ENCODE measurements at regions of chr3 and their contacts with region 1.

Region 1: GRCh38 chr3:56988458-56989168 is 71.9 kb upstream of the SPATA12 start:
- DNase-seq: peak; percentile 81 to 87 (median 84)
- ATAC-seq: peak; percentile 69
- H3K4me3 ChIP-seq: no peak overlapping the region
- H3K27ac ChIP-seq: peak overlapping the region in 2 of 4 donors; percentile 34 to 71
- H3K4me1 ChIP-seq: peaks cover 27% of the 10 kb centered on the region
- H3K27me3 ChIP-seq: no peaks in the 10 kb centered on the region
- CTCF ChIP-seq: peak; percentile 61 to 89 (median 80)
- POLR2A ChIP-seq: no peak

Region 2: DNA sequence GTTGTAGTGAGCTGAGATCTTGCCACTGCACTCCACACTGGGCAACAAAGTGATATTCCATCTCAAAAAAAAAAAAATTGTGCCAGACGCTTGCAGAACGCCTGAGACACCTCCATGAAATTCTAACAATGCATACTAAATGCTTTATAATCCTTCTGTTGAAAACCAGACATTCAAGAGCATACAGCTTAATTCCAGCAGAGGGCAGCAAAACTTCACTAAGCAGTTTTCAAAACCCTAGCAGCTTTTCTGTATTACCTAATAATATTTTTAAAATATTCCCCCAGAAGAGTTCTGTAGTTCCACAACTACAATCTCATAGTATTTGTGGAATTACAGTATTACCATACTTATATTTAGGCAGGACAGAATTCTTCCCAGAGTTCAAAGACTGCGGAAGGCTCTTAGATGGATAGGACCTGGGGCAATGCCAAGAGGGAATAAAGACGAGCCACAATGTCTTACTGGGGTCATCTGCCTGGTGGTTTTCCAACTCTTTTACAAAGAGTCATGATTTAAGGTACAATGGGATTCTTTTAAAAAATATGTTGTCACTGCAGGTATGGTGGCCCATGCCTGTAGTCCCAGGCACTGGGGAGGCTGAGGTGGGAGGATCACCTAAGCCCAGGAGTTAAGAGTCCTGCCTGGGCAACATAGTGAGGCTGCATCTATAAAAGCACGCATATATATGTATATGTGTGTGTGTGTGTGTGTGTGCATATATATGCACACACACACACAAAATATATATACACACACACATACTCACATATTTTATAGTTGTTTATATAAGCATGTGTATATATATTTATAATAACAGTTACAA is 285.9 kb before region 1 on chr3:
- intact Hi-C with region 1: loop called (anchors 5 kb)
- DNase-seq: peak; percentile 60 to 80 (median 64)
- ATAC-seq: peak; percentile 79
- H3K4me3 ChIP-seq: no peak overlapping the region
- H3K27ac ChIP-seq: no peak overlapping the region
- H3K4me1 ChIP-seq: peaks cover 3% of the 10 kb centered on the region
- H3K27me3 ChIP-seq: no peaks in the 10 kb centered on the region
- CTCF ChIP-seq: peak; percentile 65 to 95 (median 88)
- POLR2A ChIP-seq: no peak